ENCODE measurements at regions of chr15 and their contacts with region 1.

Region 1: GRCh38 chr15:42273102-42273899 is at the starts of genes GANC and TMEM87A:
- DNase-seq: peak; percentile 97 to 98
- ATAC-seq: peak; percentile 93 to 97 (median 94)
- H3K4me3 ChIP-seq: peak within 1 kb of the TSS; percentile 73
- H3K27ac ChIP-seq: peak within 1 kb of the TSS; percentile 97
- H3K4me1 ChIP-seq: peaks cover 40% of the 10 kb centered on the region
- H3K27me3 ChIP-seq: no peaks in the 10 kb centered on the region
- CTCF ChIP-seq: no peak
- total RNA-seq, gene GANC: 20.3 to 37.7 (median 24.2) TPM
- total RNA-seq, gene TMEM87A: 17.6 to 30.4 (median 26.2) TPM

Region 2: DNA sequence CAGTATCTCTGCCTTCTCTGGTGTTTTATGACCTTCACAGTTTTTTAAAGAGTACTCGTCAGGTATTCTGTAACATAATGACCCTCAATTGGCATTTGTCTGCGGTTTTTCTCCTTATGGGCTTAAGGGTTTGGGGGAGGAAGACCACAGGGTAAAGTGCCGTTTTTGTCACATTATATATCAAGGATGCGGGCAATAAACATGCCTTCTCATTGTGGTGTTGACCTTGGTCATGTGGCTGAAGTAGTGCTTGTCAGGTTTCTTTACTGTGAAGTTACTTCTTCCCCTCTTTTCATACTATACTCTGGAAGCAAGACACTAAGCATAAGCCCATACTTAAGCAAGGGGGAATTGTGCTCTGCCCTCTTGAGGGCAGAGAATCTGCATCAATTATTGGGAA is 102.6 kb after region 1 on chr15:
- intact Hi-C with region 1: no loop called
- DNase-seq: no peak
- ATAC-seq: no peak
- H3K4me3 ChIP-seq: no peak overlapping the region
- H3K27ac ChIP-seq: peak overlapping the region; percentile 96
- H3K4me1 ChIP-seq: peaks cover 33% of the 10 kb centered on the region
- H3K27me3 ChIP-seq: no peaks in the 10 kb centered on the region
- CTCF ChIP-seq: no peak

Region 3: DNA sequence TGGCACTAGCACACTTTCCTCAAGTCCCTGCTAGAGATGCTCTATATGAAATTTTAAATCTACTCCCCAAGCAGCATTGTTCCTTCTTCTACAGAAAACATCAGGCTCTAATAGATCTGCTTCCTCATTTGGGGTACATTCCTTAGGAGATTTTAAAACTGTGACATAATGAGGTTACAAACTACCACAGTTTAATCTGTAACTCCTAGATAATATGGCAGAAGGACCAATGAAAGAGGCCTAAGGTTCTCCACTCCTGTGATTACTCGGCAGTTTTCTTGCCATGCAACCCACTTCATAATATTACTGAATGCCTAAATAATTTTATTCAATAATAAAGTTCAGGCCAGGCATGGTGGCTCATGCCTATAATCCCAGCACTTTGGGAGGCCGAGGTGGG is 201.5 kb after region 1 on chr15:
- intact Hi-C with region 1: loop called (anchors 5 to 10 kb)
- DNase-seq: no peak
- ATAC-seq: no peak
- H3K4me3 ChIP-seq: no peak overlapping the region
- H3K27ac ChIP-seq: peak overlapping the region; percentile 32
- H3K4me1 ChIP-seq: peaks cover 26% of the 10 kb centered on the region
- H3K27me3 ChIP-seq: no peaks in the 10 kb centered on the region
- CTCF ChIP-seq: no peak

Region 4: DNA sequence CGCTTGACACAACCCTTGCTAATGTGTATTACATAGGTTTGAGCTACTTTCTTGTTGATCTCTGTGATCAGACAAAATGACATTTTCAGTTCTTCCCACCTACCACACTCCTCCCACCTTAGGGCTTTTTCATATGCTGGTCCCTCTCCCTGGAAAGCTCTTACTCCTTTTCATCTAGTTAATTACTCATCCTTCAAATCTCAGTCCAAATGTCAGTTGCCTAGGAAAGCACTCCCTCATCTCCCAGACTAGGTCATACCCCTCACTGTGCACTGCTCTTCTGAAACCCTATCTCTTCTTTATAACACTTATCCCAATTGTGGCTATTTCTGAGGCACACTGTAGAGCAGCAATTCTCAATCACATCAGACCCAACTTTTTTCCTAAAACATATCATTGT is 210.4 kb after region 1 on chr15:
- intact Hi-C with region 1: loop called in 1 of 2 experiments (anchors 10 kb)
- DNase-seq: no peak
- ATAC-seq: peak in 1 of 4 donors; percentile 27
- H3K4me3 ChIP-seq: no peak overlapping the region
- H3K27ac ChIP-seq: no peak overlapping the region
- H3K4me1 ChIP-seq: peaks cover 5% of the 10 kb centered on the region
- H3K27me3 ChIP-seq: no peaks in the 10 kb centered on the region
- CTCF ChIP-seq: no peak